ENCODE measurements at regions of chr3 and their contacts with region 1.

Region 1: GRCh38 chr3:52291508-52292181 is 4.0 kb downstream of the GLYCTK start:
- DNase-seq: peak in 1 of 2 experiments; percentile 80
- H3K4me3 ChIP-seq: no peak overlapping the region
- H3K27ac ChIP-seq: no peak overlapping the region
- H3K4me1 ChIP-seq: peaks cover 0 to under 1% (median 0%) of the 10 kb centered on the region in 4 experiments; a peak in 3 of 7 replicates
- H3K27me3 ChIP-seq: no peaks in the 10 kb centered on the region
- CTCF ChIP-seq: peak in 2 of 3 experiments; percentile 64 to 82; a peak in 3 of 4 replicates
- EP300 ChIP-seq: no peak
- POLR2A ChIP-seq: no peak
- RAD21 ChIP-seq: peak; percentile 89 to 92

Region 2: DNA sequence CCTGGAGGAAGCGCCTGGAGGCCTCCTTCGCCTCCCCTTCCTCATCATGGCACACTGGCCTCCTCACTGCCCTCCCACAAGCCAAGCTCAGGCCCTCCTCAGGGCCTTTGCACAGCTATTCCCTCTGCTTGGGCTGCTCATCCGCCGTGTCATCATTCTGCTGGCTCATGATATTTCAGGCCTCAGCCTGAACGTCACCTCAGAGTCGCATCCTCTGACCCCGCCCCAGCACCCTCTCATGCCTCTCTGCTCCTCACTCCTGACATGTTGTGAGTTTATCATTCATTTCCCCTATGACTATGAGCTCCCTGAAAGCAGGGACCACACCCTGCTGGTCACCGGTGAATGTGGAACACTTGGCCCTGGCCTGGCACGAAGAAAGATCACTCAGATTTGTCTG is 116.7 kb before region 1 on chr3:
- CTCF ChIA-PET with region 1: no interaction called
- POLR2A ChIA-PET with region 1: no interaction called
- DNase-seq: no peak
- H3K4me3 ChIP-seq: no peak overlapping the region
- H3K27ac ChIP-seq: no peak overlapping the region
- H3K4me1 ChIP-seq: peaks cover 0 to 5% (median 0%) of the 10 kb centered on the region in 4 experiments; a peak in 1 of 7 replicates
- H3K27me3 ChIP-seq: no peaks in the 10 kb centered on the region; a peak in 2 of 7 replicates
- CTCF ChIP-seq: no peak
- EP300 ChIP-seq: no peak
- POLR2A ChIP-seq: no peak
- RAD21 ChIP-seq: no peak

Region 3: GRCh38 chr3:52238761-52239701 is 52.6 kb before region 1 on chr3 and contains the start of gene TWF2:
- CTCF ChIA-PET with region 1: interaction called, 6 read pairs
- POLR2A ChIA-PET with region 1: interaction called, 15 read pairs
- DNase-seq: peak in 1 of 2 experiments; percentile 87
- H3K4me3 ChIP-seq: peak within 1 kb of the TSS; percentile 72 to 95 (median 91)
- H3K27ac ChIP-seq: peak within 1 kb of the TSS; percentile 61; the same call in 1 of the 2 replicates
- H3K4me1 ChIP-seq: peaks cover 15 to 42% (median 28%) of the 10 kb centered on the region in 4 experiments
- H3K27me3 ChIP-seq: peaks cover 0 to 6% (median 3%) of the 10 kb centered on the region in 4 experiments; a peak in 3 of 7 replicates
- CTCF ChIP-seq: peak in 2 of 3 experiments; percentile 38 to 40; a peak in 2 of 4 replicates
- EP300 ChIP-seq: no peak
- POLR2A ChIP-seq: peak in 1 of 2 experiments; percentile 75; a peak in 2 of 3 replicates
- RAD21 ChIP-seq: peak in 1 of 2 experiments; percentile 14; a peak in 1 of 4 replicates
- total RNA-seq, gene TWF2: 62.6 and 65.2 TPM in 2 replicates

Region 4: GRCh38 chr3:52317208-52318000 is 25.8 kb after region 1 on chr3:
- CTCF ChIA-PET with region 1: interaction called, 12 read pairs
- POLR2A ChIA-PET with region 1: interaction called, 24 read pairs
- DNase-seq: peak; percentile 56 to 92
- H3K4me3 ChIP-seq: peak overlapping the region; percentile 39 to 62 (median 48); a peak in 7 of 8 replicates
- H3K27ac ChIP-seq: no peak overlapping the region
- H3K4me1 ChIP-seq: peaks cover 0 to 3% (median 3%) of the 10 kb centered on the region in 4 experiments; a peak in 5 of 7 replicates
- H3K27me3 ChIP-seq: peaks cover 0 to 14% (median 10%) of the 10 kb centered on the region in 4 experiments; a peak in 4 of 7 replicates
- CTCF ChIP-seq: no peak
- EP300 ChIP-seq: no peak
- POLR2A ChIP-seq: peak in 1 of 2 experiments; percentile 49; a peak in 1 of 3 replicates
- RAD21 ChIP-seq: no peak

Region 5: DNA sequence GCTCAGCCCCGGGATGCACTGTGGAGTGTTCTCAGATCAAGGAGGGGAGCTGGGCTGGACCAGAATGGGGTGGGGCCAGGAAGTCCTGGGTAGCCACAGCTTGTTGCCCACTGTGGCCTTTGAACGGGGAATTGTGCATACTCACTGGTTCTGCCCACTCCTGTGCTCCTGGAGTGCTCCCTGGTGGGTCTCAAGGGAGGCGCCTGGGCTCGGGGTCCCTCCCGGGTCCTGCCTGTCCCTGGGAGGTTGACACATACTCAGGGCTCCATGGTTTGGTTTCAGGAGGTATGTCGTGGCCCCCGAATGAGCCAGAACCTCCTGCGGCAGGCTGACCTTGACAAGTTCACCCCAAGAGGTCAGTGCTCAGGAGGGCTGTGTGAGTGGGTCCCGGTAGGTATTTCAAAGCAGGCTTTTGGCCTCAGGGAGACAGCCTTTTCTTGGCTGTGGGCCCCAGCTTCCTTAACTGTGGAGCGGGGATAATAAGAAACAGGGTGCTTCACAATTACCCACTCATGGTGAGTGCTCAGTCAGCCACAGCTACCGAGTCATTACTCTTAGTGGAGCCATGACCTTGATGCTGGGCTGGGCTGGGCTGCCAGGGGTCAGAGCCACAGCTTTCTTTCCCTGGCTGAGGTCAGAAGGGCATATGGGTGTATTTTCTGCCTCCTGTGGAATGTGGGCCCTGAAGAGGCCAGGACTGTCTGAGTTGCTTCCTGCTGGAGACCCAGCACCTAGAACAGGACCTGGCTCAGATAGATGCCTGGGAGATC is 32.1 kb after region 1 on chr3:
- CTCF ChIA-PET with region 1: interaction called, 12 read pairs
- POLR2A ChIA-PET with region 1: interaction called, 24 read pairs
- DNase-seq: no peak
- H3K4me3 ChIP-seq: no peak overlapping the region
- H3K27ac ChIP-seq: no peak overlapping the region
- H3K4me1 ChIP-seq: no peaks in the 10 kb centered on the region
- H3K27me3 ChIP-seq: peaks cover 0 to 5% (median 4%) of the 10 kb centered on the region in 4 experiments; a peak in 4 of 7 replicates
- CTCF ChIP-seq: no peak
- EP300 ChIP-seq: no peak
- POLR2A ChIP-seq: no peak
- RAD21 ChIP-seq: no peak; a peak in 1 of 4 replicates

Region 6: DNA sequence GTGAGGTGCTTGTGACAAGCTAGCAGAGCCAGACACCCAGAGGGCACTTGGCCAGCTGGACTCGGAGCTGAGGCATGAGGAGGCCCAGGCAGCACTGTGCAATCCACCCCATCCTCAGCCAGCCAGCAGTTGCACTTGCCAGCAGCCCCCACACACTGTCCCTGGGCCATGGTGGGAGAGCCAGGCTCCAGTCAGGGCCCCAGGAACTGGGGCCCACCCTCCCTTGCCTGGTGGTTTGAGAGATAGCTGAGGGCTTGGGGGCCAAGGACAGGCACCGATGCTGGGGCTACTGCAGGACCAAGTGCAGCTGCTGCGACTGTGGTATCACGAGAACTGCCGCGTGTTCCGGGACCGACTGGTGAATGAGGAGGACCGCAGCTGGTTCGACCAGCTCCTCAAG is 88.0 kb after region 1 on chr3:
- CTCF ChIA-PET with region 1: interaction called, 198 read pairs
- POLR2A ChIA-PET with region 1: interaction called, 3 read pairs
- DNase-seq: no peak
- H3K4me3 ChIP-seq: no peak overlapping the region
- H3K27ac ChIP-seq: no peak overlapping the region
- H3K4me1 ChIP-seq: no peaks in the 10 kb centered on the region; a peak in 1 of 7 replicates
- H3K27me3 ChIP-seq: no peaks in the 10 kb centered on the region; a peak in 3 of 7 replicates
- CTCF ChIP-seq: no peak
- EP300 ChIP-seq: no peak
- POLR2A ChIP-seq: no peak
- RAD21 ChIP-seq: no peak

Measured in H1 (cell line).